ENCODE measurements at regions of chr15 and their contacts with region 1.

Region 1: DNA sequence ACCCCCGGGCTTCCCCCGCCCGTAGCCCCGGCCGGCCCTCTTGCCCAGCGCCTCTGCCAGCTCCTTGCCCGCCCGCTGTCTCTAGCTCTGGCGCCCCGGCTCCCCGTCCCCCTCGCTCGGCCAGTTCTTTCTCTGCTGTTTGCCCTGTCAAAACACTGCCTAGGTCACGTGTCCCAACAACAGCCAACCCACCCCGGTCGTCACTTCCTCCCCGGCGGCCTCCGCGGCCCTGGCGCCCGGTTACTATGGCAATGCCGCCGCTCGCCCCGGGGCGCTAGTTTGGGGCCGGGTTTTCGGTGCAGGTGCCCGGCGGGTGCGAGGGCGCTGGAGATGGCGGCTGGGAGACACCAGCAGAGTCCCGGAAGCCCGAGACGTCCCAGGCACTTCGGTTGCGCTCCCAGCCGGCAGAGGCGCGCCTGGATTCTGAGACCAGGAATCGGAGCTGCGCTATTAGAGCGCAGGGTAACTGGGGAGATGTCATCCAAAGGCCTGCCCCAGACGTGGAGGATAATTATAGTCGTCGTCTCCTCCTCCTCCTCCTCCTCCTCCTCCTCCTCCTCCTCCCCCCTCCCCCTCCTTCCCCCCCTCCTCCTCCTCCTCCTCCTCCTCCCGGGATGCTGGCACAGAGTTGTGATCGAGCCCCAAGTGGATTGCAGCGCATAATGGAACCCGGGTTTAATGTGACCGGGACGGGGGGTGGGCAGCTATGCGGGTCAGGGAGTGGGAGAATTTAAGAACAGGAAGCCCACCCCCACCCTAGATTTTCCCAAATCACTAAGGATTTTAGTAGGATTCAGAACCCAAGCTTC is at the start of gene ATOSA:
- DNase-seq: peak; percentile 95
- ATAC-seq: peak; percentile 96
- total RNA-seq, gene ATOSA: 21.7 TPM

Region 2: DNA sequence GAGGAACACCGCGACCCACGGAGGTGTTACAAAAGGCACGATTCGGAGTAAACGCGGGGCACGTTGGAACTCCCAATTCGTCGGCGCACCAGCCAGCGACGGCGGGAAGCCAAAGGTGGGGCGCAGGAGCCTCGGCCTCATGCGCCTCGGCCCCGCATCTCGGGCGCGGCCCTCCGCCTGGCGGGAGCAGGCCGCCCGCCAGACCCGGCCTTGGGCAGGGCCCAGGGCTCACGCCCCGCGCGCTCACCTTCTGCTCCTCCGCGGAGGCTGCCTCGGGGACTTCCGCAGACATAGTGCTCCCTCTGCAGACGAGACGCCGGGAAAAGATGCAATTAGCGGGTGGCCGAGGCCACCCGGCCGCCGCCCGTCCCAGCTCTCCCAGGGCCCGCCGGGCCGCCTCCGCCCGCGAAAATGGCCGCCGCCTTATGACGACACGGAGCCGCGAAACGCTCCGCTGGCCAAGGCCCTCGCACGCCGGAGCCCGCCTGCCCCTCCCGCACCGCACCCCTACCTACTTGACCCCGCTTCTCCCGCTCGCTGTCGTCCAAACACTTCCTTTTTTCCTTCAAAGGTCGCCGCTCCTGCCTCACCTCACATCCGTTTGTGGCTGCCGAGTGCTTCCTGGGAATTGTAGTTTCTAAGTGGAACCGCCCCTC is 110.7 kb before region 1 on chr15 and contains the start of gene ARPP19:
- intact Hi-C with region 1: loop called (anchors 5 kb)
- DNase-seq: peak; percentile 93
- ATAC-seq: peak; percentile 93
- total RNA-seq, gene ARPP19: 155 TPM

Region 3: DNA sequence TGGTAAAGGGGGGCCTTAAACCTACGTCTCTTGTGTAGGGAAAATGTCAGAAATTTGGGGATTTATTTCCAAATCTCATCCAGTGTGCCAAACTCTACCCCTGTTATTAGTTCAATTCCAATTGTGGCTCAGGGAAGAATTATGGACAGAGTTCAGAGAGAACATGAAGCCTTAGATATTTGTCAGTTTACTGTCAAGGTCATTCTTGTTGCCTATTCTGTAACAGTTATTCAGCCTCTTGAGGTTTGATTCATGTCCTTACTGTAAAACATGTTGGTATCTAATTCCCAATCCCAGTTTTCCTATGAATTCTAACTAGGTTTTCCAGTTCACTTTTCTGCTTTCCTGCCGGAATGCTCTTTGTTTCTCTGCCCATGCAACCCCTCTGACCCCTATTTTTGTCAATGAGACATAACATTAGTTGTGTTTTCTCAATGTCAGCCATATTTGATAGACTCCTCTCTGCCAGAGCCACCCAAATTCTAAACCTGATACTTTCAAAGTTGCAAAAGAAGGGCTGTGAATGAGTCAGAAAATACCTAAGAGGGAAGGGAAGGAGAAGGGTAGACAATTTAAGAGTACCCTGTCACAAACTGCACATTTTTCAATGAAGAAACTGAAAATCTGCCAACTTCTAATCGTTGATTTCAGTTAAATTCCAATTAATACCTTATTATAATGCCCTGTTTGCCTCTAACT is 52.6 kb before region 1 on chr15:
- intact Hi-C with region 1: loop called (anchors 5 kb)
- DNase-seq: no peak
- ATAC-seq: no peak

Region 4: GRCh38 chr15:52730173-52730572 is 50.7 kb after region 1 on chr15:
- intact Hi-C with region 1: loop called (anchors 5 kb)
- DNase-seq: no peak
- ATAC-seq: no peak